ENCODE measurements at regions of chr2 and their contacts with region 1.

Region 1: GRCh38 chr2:135797497-135798274 is 39.3 kb downstream of the LCT start:
- DNase-seq: peak; percentile 62
- H3K4me3 Mint-ChIP-seq: no peak overlapping the region
- H3K27ac Mint-ChIP-seq: peak overlapping the region; percentile 75
- H3K4me1 Mint-ChIP-seq: peaks cover 39% of the 10 kb centered on the region
- H3K27me3 Mint-ChIP-seq: no peaks in the 10 kb centered on the region

Region 2: GRCh38 chr2:134988994-134989605 is 808.6 kb before region 1 on chr2:
- intact Hi-C with region 1: loop called (anchors 1 kb)
- DNase-seq: no peak
- H3K4me3 Mint-ChIP-seq: no peak overlapping the region
- H3K27ac Mint-ChIP-seq: no peak overlapping the region
- H3K4me1 Mint-ChIP-seq: no peaks in the 10 kb centered on the region
- H3K27me3 Mint-ChIP-seq: peaks cover 22% of the 10 kb centered on the region

Region 3: DNA sequence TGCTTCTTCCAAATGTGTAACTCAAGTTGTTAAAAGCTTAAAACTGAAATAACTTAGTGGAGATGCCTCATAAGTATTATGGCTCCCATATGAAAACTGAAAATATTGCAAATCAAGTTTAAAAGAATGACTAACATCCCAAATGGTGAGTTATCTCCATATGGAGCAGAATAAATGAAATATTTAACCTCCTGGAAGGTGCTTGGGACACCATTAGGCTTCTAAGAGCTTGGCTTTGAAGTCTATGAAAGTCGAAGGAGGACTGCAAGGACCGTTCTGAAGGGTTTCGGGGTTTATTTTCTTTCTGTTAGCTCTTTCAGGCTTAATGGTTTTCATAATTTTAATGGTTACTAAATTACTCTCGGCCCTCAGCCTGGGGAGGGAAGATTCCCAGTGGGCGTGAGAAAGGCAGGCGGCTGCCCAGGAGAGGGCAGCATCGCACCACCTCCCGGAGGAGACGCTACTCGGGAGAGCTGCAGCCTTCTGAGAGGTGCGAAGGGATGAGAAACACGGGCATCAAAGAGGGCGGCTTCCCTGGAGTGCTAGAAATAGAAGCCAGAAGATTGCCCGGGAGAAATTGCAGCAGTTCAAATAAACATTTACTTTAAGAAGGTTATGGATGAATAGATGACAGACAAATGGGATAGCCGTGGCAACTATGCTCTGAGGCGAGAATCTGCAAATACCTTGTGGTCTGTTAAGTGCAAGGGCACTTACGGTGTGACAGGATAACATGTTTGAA is 793.5 kb before region 1 on chr2:
- intact Hi-C with region 1: loop called (anchors 1 kb)
- DNase-seq: peak; percentile 47
- H3K4me3 Mint-ChIP-seq: no peak overlapping the region
- H3K27ac Mint-ChIP-seq: no peak overlapping the region
- H3K4me1 Mint-ChIP-seq: peaks cover 7% of the 10 kb centered on the region
- H3K27me3 Mint-ChIP-seq: peaks cover 13% of the 10 kb centered on the region

Region 4: GRCh38 chr2:135473567-135473966 is 324.1 kb before region 1 on chr2:
- intact Hi-C with region 1: loop called (anchors 5 kb)
- DNase-seq: no peak
- H3K4me3 Mint-ChIP-seq: no peak overlapping the region
- H3K27ac Mint-ChIP-seq: no peak overlapping the region
- H3K4me1 Mint-ChIP-seq: peaks cover 6% of the 10 kb centered on the region
- H3K27me3 Mint-ChIP-seq: no peaks in the 10 kb centered on the region

Region 5: DNA sequence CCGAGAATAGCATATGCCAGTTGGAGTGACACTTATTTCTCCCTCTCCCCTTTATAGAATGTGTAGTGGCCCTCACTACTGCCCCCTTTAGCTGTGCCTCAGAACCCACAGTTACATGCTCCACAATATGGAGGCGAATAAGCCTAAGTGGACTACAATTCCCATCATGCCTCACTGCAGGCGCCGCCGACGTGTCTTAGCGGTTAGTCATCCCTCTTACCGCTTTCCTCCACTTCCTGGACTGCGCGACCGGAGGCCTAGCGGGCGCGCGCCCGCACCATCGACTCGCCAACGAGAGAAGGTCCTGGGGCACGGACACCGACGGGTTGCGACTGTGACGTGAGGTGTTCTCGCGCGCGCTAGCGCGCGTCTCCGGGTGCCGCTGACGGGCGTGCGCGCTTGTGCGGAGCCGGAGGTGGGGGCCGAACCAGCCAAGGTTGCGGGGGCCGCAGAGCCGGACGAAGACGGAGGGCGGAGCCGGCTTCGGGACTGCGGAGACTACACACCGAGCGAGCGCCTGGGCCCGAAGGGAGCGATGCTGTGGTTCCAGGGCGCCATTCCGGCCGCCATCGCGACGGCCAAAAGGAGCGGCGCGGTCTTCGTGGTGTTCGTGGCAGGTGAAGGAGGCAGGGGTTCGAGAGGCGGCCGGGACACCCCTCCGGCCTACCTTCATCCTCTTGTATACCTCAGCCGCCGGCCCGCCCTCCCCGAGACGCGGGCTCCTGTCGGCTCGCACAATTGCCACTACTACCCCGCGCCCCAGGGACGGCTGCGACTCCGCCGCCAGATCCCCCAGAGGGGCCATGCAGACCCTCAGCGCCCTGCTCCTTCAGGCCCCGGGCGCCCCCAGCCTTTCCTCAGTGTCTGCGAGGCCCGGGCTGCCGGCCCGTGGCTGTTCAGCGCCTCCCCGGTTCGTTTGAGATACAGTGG is 56.0 kb before region 1 on chr2 and contains the start of gene UBXN4:
- intact Hi-C with region 1: loop called (anchors 1 kb)
- DNase-seq: peak; percentile 89
- H3K4me3 Mint-ChIP-seq: peak within 1 kb of the TSS; percentile 99
- H3K27ac Mint-ChIP-seq: peak within 1 kb of the TSS; percentile 100
- H3K4me1 Mint-ChIP-seq: peaks cover 36% of the 10 kb centered on the region
- H3K27me3 Mint-ChIP-seq: no peaks in the 10 kb centered on the region
- total RNA-seq, gene UBXN4: 115 and 121 TPM in 2 replicates

Region 6: GRCh38 chr2:135820003-135820618 is 22.4 kb after region 1 on chr2:
- intact Hi-C with region 1: loop called (anchors 1 kb)
- DNase-seq: peak; percentile 75
- H3K4me3 Mint-ChIP-seq: peak overlapping the region; percentile 80
- H3K27ac Mint-ChIP-seq: peak overlapping the region; percentile 89
- H3K4me1 Mint-ChIP-seq: peaks cover 52% of the 10 kb centered on the region
- H3K27me3 Mint-ChIP-seq: no peaks in the 10 kb centered on the region

Region 7: DNA sequence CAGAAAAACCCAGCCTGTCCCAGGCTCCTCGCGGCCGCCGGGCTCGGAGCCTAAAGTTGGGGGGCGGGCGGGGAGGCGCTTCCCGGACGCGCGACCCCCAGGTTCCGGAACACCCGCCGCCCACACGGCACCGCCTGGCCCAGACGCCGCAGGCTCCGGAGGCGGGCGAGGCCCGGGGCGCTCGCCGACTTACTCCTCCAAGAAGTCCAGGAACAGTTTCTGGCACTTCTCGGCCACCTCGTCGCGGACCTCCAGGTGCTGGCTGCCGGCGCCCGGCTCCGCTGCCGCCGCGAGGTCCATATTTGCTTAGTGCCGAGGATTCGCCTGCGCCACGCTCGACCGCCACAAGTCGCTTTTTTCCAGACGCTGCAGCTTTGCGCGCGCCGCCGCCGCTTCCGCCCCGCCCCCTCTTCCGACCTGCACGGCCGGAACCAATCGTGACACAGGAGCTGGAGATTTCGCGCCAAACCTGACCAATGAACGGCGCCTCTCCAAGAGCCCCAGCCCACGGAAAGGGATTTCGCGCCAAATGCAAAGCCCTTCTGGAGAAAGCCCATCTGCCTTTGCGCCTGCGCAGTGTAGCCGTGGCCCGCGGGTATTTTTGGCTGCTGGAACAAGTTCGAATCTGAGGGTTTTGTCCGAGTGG is 78.5 kb after region 1 on chr2 and contains the start of gene MCM6:
- intact Hi-C with region 1: loop called (anchors 1 kb)
- DNase-seq: peak; percentile 99
- H3K4me3 Mint-ChIP-seq: peak within 1 kb of the TSS; percentile 98
- H3K27ac Mint-ChIP-seq: peak within 1 kb of the TSS; percentile 99
- H3K4me1 Mint-ChIP-seq: peaks cover 45% of the 10 kb centered on the region
- H3K27me3 Mint-ChIP-seq: peaks cover 2% of the 10 kb centered on the region
- total RNA-seq, gene MCM6: 176 and 177 TPM in 2 replicates